ENCODE measurements at regions of chr12 and their contacts with region 1.

Region 1: GRCh38 chr12:14995583-14996425 is 23.0 kb downstream of the PDE6H start:
- DNase-seq: no peak
- H3K4me3 ChIP-seq: no peak overlapping the region
- H3K27ac ChIP-seq: peak overlapping the region in 3 of 4 donors; percentile 12 to 62 (median 43)
- H3K4me1 ChIP-seq: peaks cover 0 to 60% (median 46%) of the 10 kb centered on the region in 4 donors
- H3K27me3 ChIP-seq: no peaks in the 10 kb centered on the region
- CTCF ChIP-seq: peak; percentile 21 to 69 (median 38)
- EP300 ChIP-seq: no peak
- POLR2A ChIP-seq: no peak

Region 2: DNA sequence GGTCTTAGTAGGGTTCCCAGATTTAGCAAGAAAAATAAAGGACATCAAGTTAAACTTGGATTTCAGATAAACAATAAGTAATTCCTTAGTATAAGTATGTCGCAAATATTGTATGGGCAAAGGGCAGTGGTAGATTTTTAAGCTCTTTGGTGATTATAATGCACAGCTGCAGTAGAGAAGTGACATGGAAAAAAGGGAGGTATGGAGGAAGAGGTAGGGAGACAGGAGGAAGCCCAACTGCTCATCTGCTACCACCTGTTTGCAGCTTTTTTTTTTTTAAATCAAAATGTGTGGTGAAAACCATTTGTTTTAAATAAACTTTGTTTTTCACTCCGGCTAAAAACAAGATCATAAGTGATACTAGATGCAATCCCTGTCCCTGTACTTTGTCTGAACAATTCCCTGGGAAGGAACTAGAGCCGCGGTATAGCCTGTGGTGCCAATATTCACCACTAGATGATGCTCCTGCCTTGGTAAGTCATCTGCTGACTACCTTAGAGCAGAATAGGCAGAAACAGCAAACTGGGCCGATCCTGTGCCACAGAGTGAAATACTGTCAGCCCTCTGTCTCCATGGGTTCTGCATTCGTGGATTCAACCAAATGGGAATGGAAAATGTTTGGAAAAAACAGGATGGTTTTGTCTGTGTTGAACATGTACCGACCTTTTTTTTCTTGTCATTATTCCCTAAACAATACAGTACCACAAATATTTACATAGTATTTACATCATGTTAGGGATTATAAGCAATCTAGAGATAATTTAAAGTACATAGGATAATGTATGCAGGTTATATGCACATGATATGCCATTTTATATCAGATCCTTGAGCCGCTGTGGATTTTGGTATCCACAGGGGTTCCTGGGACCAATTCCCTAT is 365.7 kb before region 1 on chr12:
- intact Hi-C with region 1: loop called (anchors 10 kb)
- DNase-seq: peak; percentile 78
- H3K4me3 ChIP-seq: no peak overlapping the region
- H3K27ac ChIP-seq: no peak overlapping the region
- H3K4me1 ChIP-seq: peaks cover 0 to 3% (median 0%) of the 10 kb centered on the region in 4 donors
- H3K27me3 ChIP-seq: no peaks in the 10 kb centered on the region
- CTCF ChIP-seq: peak; percentile 93 to 98 (median 97)
- EP300 ChIP-seq: no peak
- POLR2A ChIP-seq: no peak

Region 3: GRCh38 chr12:14828896-14829295 is 166.9 kb before region 1 on chr12:
- intact Hi-C with region 1: no loop called
- DNase-seq: no peak
- H3K4me3 ChIP-seq: no peak overlapping the region
- H3K27ac ChIP-seq: no peak overlapping the region
- H3K4me1 ChIP-seq: no peaks in the 10 kb centered on the region
- H3K27me3 ChIP-seq: no peaks in the 10 kb centered on the region
- CTCF ChIP-seq: no peak
- EP300 ChIP-seq: no peak
- POLR2A ChIP-seq: no peak

Region 4: GRCh38 chr12:14845350-14845750 is 150.5 kb before region 1 on chr12:
- intact Hi-C with region 1: loop called (anchors 1 kb)
- DNase-seq: no peak
- H3K4me3 ChIP-seq: no peak overlapping the region
- H3K27ac ChIP-seq: peak overlapping the region in 2 of 4 donors; percentile 9 to 18
- H3K4me1 ChIP-seq: peaks cover 0 to 39% (median 30%) of the 10 kb centered on the region in 4 donors
- H3K27me3 ChIP-seq: no peaks in the 10 kb centered on the region
- CTCF ChIP-seq: peak; percentile 68 to 91 (median 86)
- EP300 ChIP-seq: no peak
- POLR2A ChIP-seq: no peak

Region 5: GRCh38 chr12:14948672-14949071 is 47.1 kb before region 1 on chr12:
- intact Hi-C with region 1: loop called (anchors 5 kb)
- DNase-seq: no peak
- H3K4me3 ChIP-seq: no peak overlapping the region
- H3K27ac ChIP-seq: peak overlapping the region; percentile 55 to 83 (median 68)
- H3K4me1 ChIP-seq: peaks cover 0 to 65% (median 34%) of the 10 kb centered on the region in 4 donors
- H3K27me3 ChIP-seq: no peaks in the 10 kb centered on the region
- CTCF ChIP-seq: no peak
- EP300 ChIP-seq: peak in 1 of 4 donors; percentile 13
- POLR2A ChIP-seq: peak in 1 of 2 donors; percentile 9

Region 6: DNA sequence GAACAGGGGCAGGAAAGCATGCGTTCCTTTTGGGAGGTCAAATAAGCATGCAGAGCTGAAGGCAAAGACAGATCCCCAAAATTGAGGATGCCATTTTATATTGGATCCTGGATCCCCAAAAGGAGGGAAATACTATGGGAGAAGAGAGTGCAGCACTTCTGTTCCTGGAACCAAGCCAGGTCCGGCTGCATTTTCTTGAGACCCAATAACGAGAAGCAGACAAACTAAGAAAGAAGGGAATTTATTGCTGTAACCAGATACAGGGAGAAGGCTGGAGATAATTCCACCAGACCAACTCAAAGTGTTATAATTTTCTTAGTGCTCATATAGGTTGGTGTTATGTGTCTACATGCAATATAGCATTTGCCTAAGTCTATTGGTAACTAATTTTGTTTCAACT is 37.8 kb after region 1 on chr12:
- intact Hi-C with region 1: no loop called
- DNase-seq: no peak
- H3K4me3 ChIP-seq: no peak overlapping the region
- H3K27ac ChIP-seq: no peak overlapping the region
- H3K4me1 ChIP-seq: peaks cover 0 to 10% (median 3%) of the 10 kb centered on the region in 4 donors
- H3K27me3 ChIP-seq: no peaks in the 10 kb centered on the region
- CTCF ChIP-seq: no peak
- EP300 ChIP-seq: no peak
- POLR2A ChIP-seq: no peak

Region 7: GRCh38 chr12:15205341-15206010 is 209.7 kb after region 1 on chr12:
- intact Hi-C with region 1: no loop called
- DNase-seq: no peak
- H3K4me3 ChIP-seq: no peak overlapping the region
- H3K27ac ChIP-seq: peak overlapping the region; percentile 65 to 83 (median 72)
- H3K4me1 ChIP-seq: peaks cover 0 to 73% (median 69%) of the 10 kb centered on the region in 4 donors
- H3K27me3 ChIP-seq: no peaks in the 10 kb centered on the region
- CTCF ChIP-seq: no peak
- EP300 ChIP-seq: peak in 2 of 4 donors; percentile 14 to 53
- POLR2A ChIP-seq: no peak

Region 8: DNA sequence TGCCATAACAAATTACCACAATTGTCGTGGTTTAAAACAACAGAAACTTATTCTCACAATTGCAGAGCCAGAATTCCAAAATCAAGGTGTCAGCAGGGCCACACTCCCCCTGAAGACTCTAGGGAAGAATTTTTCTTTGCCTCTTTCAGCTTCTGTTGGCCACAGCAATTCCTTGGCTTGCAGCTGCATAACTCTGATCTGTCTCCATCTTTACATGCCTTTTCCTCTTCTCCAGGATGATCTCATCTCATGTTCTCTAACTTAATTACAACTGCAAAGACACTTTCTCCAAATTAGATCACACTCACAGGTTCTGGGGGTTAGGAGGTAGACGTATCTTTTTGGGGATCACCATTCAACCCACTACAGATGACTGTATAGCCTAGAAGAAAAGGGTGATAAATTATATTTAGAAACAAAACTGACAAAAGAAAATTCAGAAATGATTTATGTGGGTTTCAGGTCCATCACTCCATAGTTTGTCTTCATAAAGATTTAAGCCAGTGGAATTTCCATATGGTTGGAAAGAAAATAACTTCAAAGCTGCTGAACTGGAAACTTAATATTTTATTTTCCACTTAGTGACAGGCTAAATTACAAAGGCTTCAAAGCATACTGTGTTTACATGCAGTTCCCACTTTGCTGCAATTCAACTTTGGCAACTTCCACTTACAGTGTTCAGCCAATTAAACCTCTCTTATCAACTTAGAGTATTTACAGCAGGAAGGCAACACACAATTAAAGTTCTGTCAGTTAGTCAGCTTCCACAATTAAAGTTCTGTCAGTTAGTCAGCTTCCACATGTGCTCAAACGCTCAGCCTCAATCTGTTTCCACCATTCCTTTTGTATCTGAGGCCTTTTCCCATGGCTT is 580.1 kb after region 1 on chr12:
- intact Hi-C with region 1: loop called (anchors 10 kb)
- DNase-seq: no peak
- H3K4me3 ChIP-seq: no peak overlapping the region
- H3K27ac ChIP-seq: no peak overlapping the region
- H3K4me1 ChIP-seq: no peaks in the 10 kb centered on the region
- H3K27me3 ChIP-seq: no peaks in the 10 kb centered on the region
- CTCF ChIP-seq: no peak
- EP300 ChIP-seq: no peak
- POLR2A ChIP-seq: no peak